ENCODE measurements at regions of chr1 and their contacts with region 1.

Region 1: GRCh38 chr1:75724472-75725022 is at the start of gene ACADM:
- DNase-seq: peak; percentile 93 to 97 (median 96)
- ATAC-seq: peak; percentile 94 to 98 (median 94)
- H3K4me3 ChIP-seq: peak within 1 kb of the TSS; percentile 65 to 88 (median 82)
- H3K27ac ChIP-seq: peak within 1 kb of the TSS; percentile 85 to 91 (median 89)
- H3K4me1 ChIP-seq: peaks cover 0 to 19% (median 2%) of the 10 kb centered on the region in 4 donors
- H3K27me3 ChIP-seq: no peaks in the 10 kb centered on the region
- CTCF ChIP-seq: no peak
- POLR2A ChIP-seq: peak; percentile 86
- total RNA-seq, gene ACADM: 71.9 to 168 (median 124) TPM

Region 2: GRCh38 chr1:75785983-75786853 is 61.7 kb after region 1 on chr1 and contains the start of gene RABGGTB:
- intact Hi-C with region 1: loop called in 1 of 2 experiments (anchors 10 kb)
- DNase-seq: peak; percentile 95 to 96 (median 96)
- ATAC-seq: peak; percentile 98 to 99 (median 99)
- H3K4me3 ChIP-seq: peak within 1 kb of the TSS; percentile 61 to 81 (median 64)
- H3K27ac ChIP-seq: peak within 1 kb of the TSS; percentile 71 to 85 (median 73)
- H3K4me1 ChIP-seq: peaks cover 0 to 41% (median 18%) of the 10 kb centered on the region in 4 donors
- H3K27me3 ChIP-seq: no peaks in the 10 kb centered on the region
- CTCF ChIP-seq: no peak
- POLR2A ChIP-seq: peak; percentile 86
- total RNA-seq, gene RABGGTB: 34.1 to 47.8 (median 41.4) TPM

Measured in right lobe of liver (tissue), 6 donors.